Activated CD4-positive, alpha-beta T cell treated with anti-CD3 and anti-CD28 coated beads for 36 hours (primary cell): ENCODE measurements at regions of chr14 and their contacts with region 1.

Region 1: DNA sequence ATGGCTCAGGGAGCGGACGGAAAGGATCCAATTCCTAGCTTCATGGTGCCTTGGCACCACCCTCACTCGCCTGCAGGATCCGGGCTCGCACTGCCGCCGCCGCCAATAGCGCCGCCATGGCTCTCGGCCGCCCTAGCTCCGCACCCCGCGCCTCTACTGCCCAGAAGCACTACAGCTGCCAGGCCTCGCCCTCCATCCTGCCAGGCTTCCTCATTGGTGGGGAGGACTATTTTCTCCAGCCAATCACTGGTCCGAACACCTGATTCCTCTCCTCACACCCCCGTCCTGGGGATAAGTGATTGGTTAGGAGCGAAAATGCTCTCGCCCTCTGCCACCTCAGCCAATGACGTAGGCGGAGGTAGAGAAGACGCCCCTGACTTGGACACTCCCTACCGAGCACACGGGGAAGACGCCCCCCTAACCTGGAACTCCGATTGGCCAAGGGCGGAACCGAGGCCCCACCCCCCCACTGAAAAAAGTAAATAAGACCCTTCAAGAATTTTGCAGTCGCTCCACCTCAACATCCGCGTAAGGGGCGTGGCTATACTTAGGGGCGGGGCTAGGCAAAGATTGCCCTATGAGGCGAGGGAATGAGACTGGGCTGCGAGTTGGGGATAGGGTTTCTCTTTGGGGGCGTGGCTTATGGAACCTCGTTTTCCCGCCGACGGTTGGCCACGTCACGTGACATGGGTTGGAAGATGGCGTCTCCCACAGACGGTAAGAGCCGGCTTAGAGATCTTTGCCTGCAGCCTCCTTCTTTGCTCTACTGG is at the starts of genes ALDH6A1 and LIN52:
- DNase-seq: peak; percentile 99
- ATAC-seq: peak; percentile 93
- H3K4me3 Mint-ChIP-seq: peak within 1 kb of the TSS; percentile 95
- H3K27ac Mint-ChIP-seq: peak within 1 kb of the TSS; percentile 95
- H3K4me1 Mint-ChIP-seq: peaks cover 31% of the 10 kb centered on the region
- H3K27me3 Mint-ChIP-seq: no peaks in the 10 kb centered on the region
- total RNA-seq, gene ALDH6A1: 17.2 to 24.6 TPM
- total RNA-seq, gene LIN52: 10.3 to 13.2 TPM

Region 2: GRCh38 chr14:73295198-73295796 is 789.2 kb before region 1 on chr14:
- CTCF ChIA-PET with region 1: no interaction called
- POLR2A ChIA-PET with region 1: no interaction called
- intact Hi-C with region 1: no loop called
- DNase-seq: no peak
- ATAC-seq: no peak
- H3K4me3 Mint-ChIP-seq: no peak overlapping the region
- H3K27ac Mint-ChIP-seq: no peak overlapping the region
- H3K4me1 Mint-ChIP-seq: peaks cover 18% of the 10 kb centered on the region
- H3K27me3 Mint-ChIP-seq: no peaks in the 10 kb centered on the region

Region 3: DNA sequence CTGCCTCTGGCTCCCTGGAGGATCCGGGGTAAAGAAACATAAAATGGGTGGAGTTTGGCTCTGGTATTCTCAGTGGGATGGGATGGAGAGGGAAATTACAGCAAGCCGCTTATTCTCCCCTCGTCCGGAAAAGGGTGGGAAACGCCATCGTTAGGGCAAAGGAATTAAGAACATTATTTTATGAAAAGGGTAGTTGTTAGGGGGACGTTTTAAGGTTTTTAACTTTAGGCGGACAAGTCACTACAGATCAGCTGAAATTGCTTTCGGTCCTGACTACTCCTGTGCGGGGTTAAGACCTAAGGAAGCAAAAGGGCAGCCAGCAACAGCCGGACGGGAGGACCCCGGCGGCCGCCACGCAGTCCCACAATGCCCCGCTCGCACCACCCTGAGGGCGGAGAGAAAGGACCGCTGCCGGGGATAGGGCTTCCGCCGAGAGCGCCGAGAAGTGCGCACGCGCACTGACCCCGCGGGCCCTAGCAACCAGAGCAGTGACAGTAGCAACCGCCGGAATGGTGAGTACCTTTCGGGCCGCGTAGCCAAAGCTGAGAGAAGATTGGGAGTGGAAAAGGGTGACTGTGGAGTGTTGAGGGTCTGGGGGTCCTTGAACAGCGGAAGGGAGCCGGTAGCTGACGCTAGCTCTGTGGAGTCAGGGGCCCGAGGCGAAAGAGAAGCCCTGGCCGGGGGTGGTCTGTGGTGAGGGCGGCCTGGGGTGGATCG is 439.8 kb before region 1 on chr14 and contains the start of gene DNAL1:
- CTCF ChIA-PET with region 1: interaction called, 3 read pairs
- POLR2A ChIA-PET with region 1: interaction called, 3 read pairs
- intact Hi-C with region 1: loop called in 1 of 2 experiments (anchors 1 kb)
- DNase-seq: peak; percentile 95
- ATAC-seq: peak; percentile 100
- H3K4me3 Mint-ChIP-seq: peak within 1 kb of the TSS; percentile 98
- H3K27ac Mint-ChIP-seq: peak within 1 kb of the TSS; percentile 91
- H3K4me1 Mint-ChIP-seq: peaks cover 16% of the 10 kb centered on the region
- H3K27me3 Mint-ChIP-seq: no peaks in the 10 kb centered on the region
- total RNA-seq, gene DNAL1: 3.7 to 6.8 TPM

Region 4: DNA sequence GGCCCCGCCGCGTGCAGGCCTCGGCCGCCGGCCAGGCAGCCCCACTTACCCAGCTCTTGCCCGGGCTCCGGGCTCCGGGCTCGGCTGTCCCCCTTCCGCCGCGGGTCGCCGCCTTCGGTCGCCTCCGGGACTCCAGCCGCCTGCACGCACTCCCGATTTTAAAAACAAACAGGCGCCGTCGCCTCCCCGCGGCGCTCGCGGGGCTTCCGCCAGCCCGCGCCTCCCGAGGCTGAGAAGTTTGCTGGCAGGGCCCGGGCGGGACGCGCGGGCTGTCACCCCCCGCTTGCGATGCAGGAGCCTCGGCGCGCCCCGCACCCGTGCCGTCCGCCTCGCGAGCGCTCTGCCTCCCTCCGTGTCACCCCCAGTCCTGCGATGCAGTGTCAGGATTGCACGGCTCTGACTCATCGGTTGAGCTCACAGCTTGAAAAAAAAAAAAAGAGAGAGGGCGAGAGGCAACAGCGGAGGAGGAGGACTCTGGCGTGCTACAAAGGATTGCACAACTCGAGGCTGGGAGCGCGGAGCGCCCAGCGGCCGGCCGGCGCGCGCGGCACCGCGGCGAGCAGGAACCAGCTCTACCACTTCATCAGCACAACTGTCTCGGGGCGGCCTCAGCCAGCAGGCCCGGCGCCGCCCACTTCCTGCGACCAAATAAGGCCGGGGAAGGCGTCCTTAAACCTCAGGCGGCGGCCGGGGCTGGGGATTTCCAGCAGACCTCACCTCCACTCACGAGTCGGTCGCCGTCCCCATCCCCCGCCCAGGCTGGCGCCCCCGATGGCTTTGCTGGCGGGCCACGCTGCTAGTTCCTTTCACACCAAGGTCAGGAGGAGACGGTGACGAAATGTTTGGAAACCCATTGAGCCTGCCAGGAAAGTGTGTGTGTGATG is 324.5 kb before region 1 on chr14:
- CTCF ChIA-PET with region 1: no interaction called
- POLR2A ChIA-PET with region 1: no interaction called
- intact Hi-C with region 1: loop called in 1 of 2 experiments (anchors 1 kb)
- DNase-seq: peak; percentile 98
- ATAC-seq: peak; percentile 74
- H3K4me3 Mint-ChIP-seq: peak overlapping the region; percentile 83
- H3K27ac Mint-ChIP-seq: peak overlapping the region; percentile 99
- H3K4me1 Mint-ChIP-seq: peaks cover 76% of the 10 kb centered on the region
- H3K27me3 Mint-ChIP-seq: no peaks in the 10 kb centered on the region

Region 5: GRCh38 chr14:74018586-74019407 is 65.7 kb before region 1 on chr14 and contains the starts of genes BBOF1 and ENTPD5:
- CTCF ChIA-PET with region 1: no interaction called
- POLR2A ChIA-PET with region 1: no interaction called
- intact Hi-C with region 1: loop called (anchors 1 kb)
- DNase-seq: peak; percentile 90
- ATAC-seq: peak; percentile 93
- H3K4me3 Mint-ChIP-seq: peak within 1 kb of the TSS; percentile 80
- H3K27ac Mint-ChIP-seq: peak within 1 kb of the TSS; percentile 93
- H3K4me1 Mint-ChIP-seq: peaks cover 12% of the 10 kb centered on the region
- H3K27me3 Mint-ChIP-seq: no peaks in the 10 kb centered on the region
- total RNA-seq, gene BBOF1: 1.9 to 2.1 TPM
- total RNA-seq, gene ENTPD5: 8.7 to 10.0 TPM

Region 6: DNA sequence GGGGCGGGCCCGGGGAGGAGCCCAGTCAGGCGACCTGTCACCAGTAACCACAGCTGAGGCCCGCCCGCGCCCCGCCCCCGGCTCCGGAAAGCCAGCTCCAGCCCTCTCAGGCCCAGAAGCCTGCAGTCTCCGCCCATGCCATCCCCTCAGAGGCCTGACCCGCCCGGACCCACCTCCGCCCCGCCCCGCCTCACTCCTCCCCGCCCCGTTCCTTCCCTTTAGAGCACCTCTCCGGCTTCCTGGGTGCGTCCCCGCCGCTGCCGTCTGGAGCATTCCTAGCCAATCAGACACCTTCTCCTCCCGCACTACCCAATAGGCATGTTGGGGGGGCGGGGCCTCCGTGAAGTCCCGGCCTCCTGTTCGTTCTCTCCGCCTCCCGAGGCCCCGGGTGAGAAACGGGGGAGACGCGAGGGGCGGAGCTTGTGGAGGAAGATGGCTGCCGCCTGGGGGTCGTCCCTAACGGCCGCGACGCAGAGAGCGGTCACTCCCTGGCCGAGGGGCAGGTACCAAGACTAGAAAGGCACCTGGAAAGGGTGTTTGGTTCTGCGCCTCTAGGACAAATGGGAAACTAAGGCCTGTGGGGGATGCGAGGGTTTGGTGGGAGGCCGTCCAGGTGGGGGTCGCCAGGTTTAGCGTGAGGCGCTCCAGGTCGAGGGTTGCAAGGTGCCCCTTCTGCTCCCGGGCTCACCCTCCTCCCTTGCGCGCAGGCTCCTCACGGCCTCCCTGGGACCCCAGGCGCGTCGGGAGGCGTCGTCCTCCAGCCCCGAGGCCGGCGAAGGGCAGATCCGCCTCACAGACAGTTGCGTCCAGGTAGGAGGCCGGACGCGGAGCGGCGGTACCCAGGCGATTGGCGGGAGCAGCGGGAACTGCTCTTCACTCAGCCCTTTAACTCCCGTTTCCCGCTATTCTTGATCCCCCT is 409.1 kb after region 1 on chr14 and contains the start of gene ISCA2:
- CTCF ChIA-PET with region 1: no interaction called
- POLR2A ChIA-PET with region 1: no interaction called
- intact Hi-C with region 1: loop called in 1 of 2 experiments (anchors 1 kb)
- DNase-seq: peak; percentile 100
- ATAC-seq: peak; percentile 96
- H3K4me3 Mint-ChIP-seq: no peak within 1 kb of the TSS
- H3K27ac Mint-ChIP-seq: peak within 1 kb of the TSS; percentile 89
- H3K4me1 Mint-ChIP-seq: peaks cover 23% of the 10 kb centered on the region
- H3K27me3 Mint-ChIP-seq: no peaks in the 10 kb centered on the region
- total RNA-seq, gene ISCA2: 29.5 to 35.9 TPM